ENCODE measurements at regions of chr7 and their contacts with region 1.

Region 1: DNA sequence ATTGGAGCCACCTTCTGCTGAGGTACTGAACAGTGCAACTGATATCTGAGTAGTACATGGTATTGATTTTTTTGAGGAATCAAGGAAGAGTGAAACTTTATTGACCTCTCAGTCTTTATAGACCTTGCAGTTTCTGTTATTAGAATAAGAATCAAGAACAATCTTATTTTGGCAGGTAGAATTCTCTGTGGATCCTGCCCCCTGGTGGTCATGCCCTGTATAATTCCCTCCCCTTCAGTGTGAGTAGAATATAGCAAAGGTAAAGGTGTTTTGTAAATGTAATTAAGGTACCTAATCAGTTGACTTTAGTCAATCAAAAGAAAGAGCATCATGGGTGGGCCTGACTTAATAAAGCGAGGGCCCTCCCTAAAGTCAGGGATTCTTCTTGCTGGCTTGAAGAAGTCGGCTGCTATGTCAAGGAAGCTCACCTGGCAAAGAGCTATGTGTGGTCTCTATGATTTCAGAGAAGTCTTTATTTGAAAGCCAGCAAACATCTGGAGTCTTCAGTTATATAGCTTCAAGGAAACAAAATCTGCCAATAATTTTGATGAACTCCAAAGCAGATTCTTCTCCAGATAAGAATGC is 142.8 kb downstream of the LSM5 start:
- DNase-seq: peak in 1 of 2 donors; percentile 17
- ATAC-seq: no peak
- H3K4me3 ChIP-seq: no peak overlapping the region
- H3K27ac ChIP-seq: no peak overlapping the region
- H3K4me1 ChIP-seq: no peaks in the 10 kb centered on the region
- H3K27me3 ChIP-seq: peaks cover 0 to 6% (median 0%) of the 10 kb centered on the region in 7 donors
- CTCF ChIP-seq: peak; percentile 46 to 77 (median 69)

Region 2: GRCh38 chr7:31744294-31744874 is 603.0 kb before region 1 on chr7:
- intact Hi-C with region 1: loop called in 6 of 10 experiments (anchors 5 to 10 kb)
- DNase-seq: peak; percentile 35 to 51
- ATAC-seq: peak in 5 of 8 donors; percentile 60 to 76 (median 63)
- H3K4me3 ChIP-seq: no peak overlapping the region
- H3K27ac ChIP-seq: no peak overlapping the region
- H3K4me1 ChIP-seq: no peaks in the 10 kb centered on the region
- H3K27me3 ChIP-seq: no peaks in the 10 kb centered on the region
- CTCF ChIP-seq: peak; percentile 66 to 89 (median 84)

Region 3: GRCh38 chr7:32212321-32212720 is 135.0 kb before region 1 on chr7:
- intact Hi-C with region 1: loop called (anchors 2 to 10 kb)
- DNase-seq: no peak
- ATAC-seq: no peak
- H3K4me3 ChIP-seq: no peak overlapping the region
- H3K27ac ChIP-seq: no peak overlapping the region
- H3K4me1 ChIP-seq: peaks cover 0 to 3% (median 0%) of the 10 kb centered on the region in 9 donors
- H3K27me3 ChIP-seq: peaks cover 0 to 19% (median 0%) of the 10 kb centered on the region in 7 donors
- CTCF ChIP-seq: no peak

Region 4: GRCh38 chr7:32218154-32218467 is 129.2 kb before region 1 on chr7:
- intact Hi-C with region 1: loop called in 7 of 10 experiments (anchors 5 to 10 kb)
- DNase-seq: no peak
- ATAC-seq: peak in 1 of 8 donors; percentile 69
- H3K4me3 ChIP-seq: no peak overlapping the region
- H3K27ac ChIP-seq: no peak overlapping the region
- H3K4me1 ChIP-seq: peaks cover 0 to 5% (median 0%) of the 10 kb centered on the region in 9 donors
- H3K27me3 ChIP-seq: peaks cover 0 to 7% (median 0%) of the 10 kb centered on the region in 7 donors
- CTCF ChIP-seq: no peak

Region 5: GRCh38 chr7:32259931-32260596 is 87.3 kb before region 1 on chr7:
- intact Hi-C with region 1: loop called in 1 of 10 experiments (anchors 5 kb)
- DNase-seq: no peak
- ATAC-seq: peak in 1 of 8 donors; percentile 26
- H3K4me3 ChIP-seq: no peak overlapping the region
- H3K27ac ChIP-seq: no peak overlapping the region
- H3K4me1 ChIP-seq: peaks cover 0 to 32% (median 5%) of the 10 kb centered on the region in 9 donors
- H3K27me3 ChIP-seq: peaks cover 0 to 6% (median 0%) of the 10 kb centered on the region in 7 donors
- CTCF ChIP-seq: no peak

Region 6: GRCh38 chr7:32476816-32477648 is 129.7 kb after region 1 on chr7:
- intact Hi-C with region 1: no loop called
- DNase-seq: no peak
- ATAC-seq: no peak
- H3K4me3 ChIP-seq: no peak overlapping the region
- H3K27ac ChIP-seq: no peak overlapping the region
- H3K4me1 ChIP-seq: peaks cover 0 to 15% (median 5%) of the 10 kb centered on the region in 9 donors
- H3K27me3 ChIP-seq: no peaks in the 10 kb centered on the region
- CTCF ChIP-seq: no peak